Right cardiac atrium (tissue), 5 donors: ENCODE measurements at regions of chr10 and their contacts with region 1.

Region 1: GRCh38 chr10:43105102-43105785 is 28.4 kb downstream of the RET start:
- DNase-seq: peak; percentile 79 to 92 (median 91)
- ATAC-seq: peak; percentile 93 to 95
- H3K4me3 ChIP-seq: peak overlapping the region; percentile 18
- H3K27ac ChIP-seq: no peak overlapping the region
- H3K4me1 ChIP-seq: no peaks in the 10 kb centered on the region
- H3K27me3 ChIP-seq: no peaks in the 10 kb centered on the region

Region 2: GRCh38 chr10:42753126-42753506 is 352.1 kb before region 1 on chr10:
- intact Hi-C with region 1: loop called in 2 of 4 experiments (anchors 10 kb)
- DNase-seq: peak; percentile 82 to 93 (median 92)
- ATAC-seq: peak; percentile 92 to 93
- H3K4me3 ChIP-seq: peak overlapping the region; percentile 52
- H3K27ac ChIP-seq: no peak overlapping the region
- H3K4me1 ChIP-seq: no peaks in the 10 kb centered on the region
- H3K27me3 ChIP-seq: no peaks in the 10 kb centered on the region

Region 3: DNA sequence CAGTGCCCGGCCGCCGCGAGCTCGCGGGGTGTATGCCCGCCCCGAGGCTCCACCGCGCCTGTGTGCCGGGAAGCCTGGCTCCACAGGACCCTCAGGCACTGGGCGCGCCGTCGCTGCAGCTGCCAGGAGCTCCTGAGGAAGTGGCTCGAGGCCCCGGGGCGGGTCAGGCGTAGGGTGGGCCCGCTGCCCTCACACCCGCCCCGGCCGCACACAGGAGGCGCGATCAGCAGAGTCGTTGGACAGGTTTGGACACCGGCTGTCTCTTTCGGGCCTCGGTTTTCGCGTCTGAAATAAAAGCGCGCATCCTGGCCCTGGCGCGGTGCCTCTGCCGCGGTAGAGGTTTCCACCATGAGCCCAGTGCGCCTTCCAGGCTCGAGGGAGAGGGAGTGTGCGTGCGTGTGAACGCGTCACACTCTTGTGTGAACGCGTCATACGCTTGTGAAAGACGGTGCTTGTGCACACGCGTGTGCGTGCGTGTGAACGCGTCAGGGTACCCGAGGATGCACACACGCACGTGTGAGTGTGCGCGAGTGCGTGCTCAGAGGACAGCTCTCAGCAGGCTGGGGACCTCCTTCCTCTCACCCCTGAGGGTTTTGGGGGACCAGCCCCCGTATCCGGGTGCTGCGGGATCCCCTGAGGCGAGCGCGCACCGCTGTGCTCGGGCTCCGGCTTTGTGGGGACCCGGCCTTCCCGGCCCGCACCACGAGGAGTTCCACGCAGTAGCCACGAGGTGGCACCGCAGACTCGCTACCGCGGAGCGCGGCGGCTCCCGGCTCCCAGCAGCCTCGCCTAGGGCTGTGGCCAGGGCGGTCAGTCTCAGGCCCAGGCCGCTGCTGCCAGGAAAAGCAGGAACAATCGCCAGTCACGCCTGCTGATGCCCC is 238.9 kb before region 1 on chr10:
- intact Hi-C with region 1: loop called (anchors 2 to 10 kb)
- DNase-seq: peak; percentile 89 to 95 (median 94)
- ATAC-seq: peak; percentile 100
- H3K4me3 ChIP-seq: no peak overlapping the region
- H3K27ac ChIP-seq: no peak overlapping the region
- H3K4me1 ChIP-seq: no peaks in the 10 kb centered on the region
- H3K27me3 ChIP-seq: no peaks in the 10 kb centered on the region

Region 4: GRCh38 chr10:42883993-42884983 is 221.0 kb before region 1 on chr10:
- intact Hi-C with region 1: no loop called
- DNase-seq: no peak
- ATAC-seq: peak in 1 of 2 donors; percentile 30
- H3K4me3 ChIP-seq: no peak overlapping the region
- H3K27ac ChIP-seq: no peak overlapping the region
- H3K4me1 ChIP-seq: no peaks in the 10 kb centered on the region
- H3K27me3 ChIP-seq: no peaks in the 10 kb centered on the region